Aorta (tissue), 5 donors: ENCODE measurements at regions of chr3 and their contacts with region 1.

Region 1: GRCh38 chr3:50542177-50543034 is 25.1 kb downstream of the C3orf18 start:
- DNase-seq: peak; percentile 66 to 88
- ATAC-seq: peak; percentile 79
- H3K4me3 ChIP-seq: no peak overlapping the region
- H3K27ac ChIP-seq: no peak overlapping the region
- H3K4me1 ChIP-seq: no peaks in the 10 kb centered on the region
- H3K27me3 ChIP-seq: no peaks in the 10 kb centered on the region

Region 2: DNA sequence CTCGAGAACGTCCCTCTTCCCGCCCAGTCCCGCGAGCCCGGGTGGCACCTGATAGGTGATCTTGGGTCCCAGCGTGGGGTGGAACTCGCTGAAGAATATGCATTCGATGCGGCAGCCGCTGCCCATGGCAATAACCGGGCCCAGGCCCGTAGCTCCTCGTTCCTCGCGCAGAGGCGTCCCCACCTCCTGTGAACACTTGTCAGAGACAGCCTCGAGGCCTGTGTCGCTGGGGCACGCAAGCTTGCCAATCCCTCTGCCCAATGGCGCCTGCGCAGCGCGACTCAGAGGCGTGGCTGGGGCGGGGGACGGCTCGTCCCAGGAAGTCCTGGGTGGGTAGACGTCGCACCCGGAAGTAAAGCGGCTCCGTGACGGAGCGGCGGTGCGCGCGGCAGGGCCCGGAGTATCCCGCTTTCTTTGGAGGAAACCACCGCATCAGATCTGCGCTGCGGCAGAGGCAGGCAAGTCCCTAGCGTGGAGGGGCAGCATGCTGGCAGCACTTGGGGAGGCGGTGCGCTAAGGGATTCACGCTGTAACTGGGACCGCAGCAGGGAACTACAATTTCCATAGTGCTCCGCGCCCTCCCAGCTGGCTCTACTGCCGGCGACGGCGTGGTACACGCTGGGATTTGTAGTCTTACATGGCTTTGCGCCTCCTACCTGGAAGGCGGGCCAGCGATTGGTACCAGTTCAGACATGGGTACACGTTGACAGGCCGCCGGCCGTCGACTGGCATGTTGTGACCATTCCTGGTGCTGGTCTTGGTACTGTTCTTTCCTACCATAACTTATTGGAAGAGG is 191.7 kb before region 1 on chr3 and contains the starts of genes CYB561D2 and NPRL2:
- intact Hi-C with region 1: loop called (anchors 2 to 5 kb)
- DNase-seq: peak; percentile 99
- ATAC-seq: peak; percentile 95
- H3K4me3 ChIP-seq: peak within 1 kb of the TSS; percentile 15 to 51
- H3K27ac ChIP-seq: peak within 1 kb of the TSS in 1 of 2 donors; percentile 75
- H3K4me1 ChIP-seq: no peaks in the 10 kb centered on the region
- H3K27me3 ChIP-seq: no peaks in the 10 kb centered on the region
- total RNA-seq, gene CYB561D2: 7.9 to 12.2 TPM
- total RNA-seq, gene NPRL2: 11.9 to 21.4 TPM

Region 3: GRCh38 chr3:50365080-50365841 is 177.1 kb before region 1 on chr3:
- intact Hi-C with region 1: loop called in 1 of 2 experiments (anchors 5 kb)
- DNase-seq: peak; percentile 89 to 93
- ATAC-seq: peak; percentile 88
- H3K4me3 ChIP-seq: peak overlapping the region; percentile 5 to 30
- H3K27ac ChIP-seq: no peak overlapping the region
- H3K4me1 ChIP-seq: no peaks in the 10 kb centered on the region
- H3K27me3 ChIP-seq: no peaks in the 10 kb centered on the region

Region 4: DNA sequence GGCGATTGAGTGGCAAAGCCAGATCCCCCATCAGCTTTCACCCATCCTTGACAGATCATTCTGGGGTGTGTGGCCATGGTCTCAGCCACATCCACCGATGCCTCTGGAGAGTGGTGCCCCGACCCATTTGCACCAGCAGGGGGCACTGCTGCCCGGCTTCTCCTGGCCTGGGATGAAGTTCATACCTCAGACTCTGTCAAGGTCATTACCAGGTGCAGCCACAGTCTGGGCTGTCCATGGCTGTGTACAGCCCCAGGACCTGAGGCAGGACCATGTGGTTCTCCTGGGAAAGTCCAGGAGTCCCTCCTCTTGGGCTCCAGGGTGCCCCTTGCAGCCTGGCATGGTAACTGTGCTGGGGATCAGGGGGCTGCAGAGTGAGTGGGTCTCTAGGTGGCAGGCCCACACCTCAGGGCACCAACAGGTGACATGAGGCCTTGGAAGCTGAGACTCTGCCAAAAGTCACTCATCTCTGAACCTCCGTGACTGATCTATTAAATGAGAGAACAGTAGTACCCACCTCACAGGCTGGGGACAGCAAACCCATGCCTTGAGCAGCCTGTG is 106.2 kb before region 1 on chr3:
- intact Hi-C with region 1: loop called (anchors 2 to 5 kb)
- DNase-seq: peak; percentile 63 to 90
- ATAC-seq: peak; percentile 61
- H3K4me3 ChIP-seq: no peak overlapping the region
- H3K27ac ChIP-seq: no peak overlapping the region
- H3K4me1 ChIP-seq: no peaks in the 10 kb centered on the region
- H3K27me3 ChIP-seq: no peaks in the 10 kb centered on the region

Region 5: DNA sequence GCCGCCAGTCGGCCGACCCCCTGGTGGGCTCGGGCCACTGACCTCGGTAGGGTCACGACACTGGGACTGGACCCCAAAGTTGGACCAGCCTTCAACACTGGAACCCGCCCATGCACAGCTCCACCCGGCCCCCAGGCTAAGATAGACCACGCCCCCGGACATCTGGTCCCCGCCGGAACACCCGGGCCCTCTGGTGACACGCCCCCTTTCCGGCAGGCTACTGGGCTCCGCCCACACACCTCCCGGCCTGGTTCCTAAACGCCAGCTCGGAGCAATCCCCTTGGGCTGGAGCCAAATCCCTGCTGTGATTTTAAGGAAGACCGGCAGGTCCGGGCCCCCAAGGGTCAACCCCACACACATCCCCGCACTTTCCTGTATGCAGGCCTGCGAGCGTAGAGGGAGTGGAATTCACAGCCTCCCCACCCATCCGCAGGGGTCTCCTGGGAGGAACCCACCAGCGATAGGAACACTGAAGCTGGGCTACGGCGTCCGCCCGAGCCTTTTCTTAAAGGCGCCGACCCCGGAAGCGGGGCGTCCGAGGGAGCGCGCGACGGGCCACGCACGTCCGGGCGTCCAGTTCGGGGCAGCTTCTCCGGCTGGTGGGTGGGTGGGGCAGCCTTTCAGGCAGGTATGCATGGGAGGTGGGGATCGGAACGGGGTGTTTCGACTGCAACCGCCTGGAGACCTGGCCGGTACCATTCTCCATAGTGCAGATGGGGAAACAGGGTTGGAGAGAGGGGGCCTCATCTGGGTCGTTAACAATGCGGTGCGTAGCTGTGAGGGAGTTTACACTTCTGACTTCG is 26.7 kb after region 1 on chr3 and contains the start of gene HEMK1:
- intact Hi-C with region 1: no loop called
- DNase-seq: peak; percentile 99
- ATAC-seq: peak; percentile 95
- H3K4me3 ChIP-seq: peak within 1 kb of the TSS; percentile 56 to 62
- H3K27ac ChIP-seq: peak within 1 kb of the TSS in 1 of 2 donors; percentile 72
- H3K4me1 ChIP-seq: no peaks in the 10 kb centered on the region
- H3K27me3 ChIP-seq: no peaks in the 10 kb centered on the region
- total RNA-seq, gene HEMK1: 12.0 to 21.3 TPM

Region 6: GRCh38 chr3:50600841-50601591 is 58.6 kb after region 1 on chr3:
- intact Hi-C with region 1: no loop called
- DNase-seq: peak; percentile 97
- ATAC-seq: peak; percentile 91
- H3K4me3 ChIP-seq: no peak overlapping the region
- H3K27ac ChIP-seq: peak overlapping the region; percentile 49 to 99
- H3K4me1 ChIP-seq: peaks cover 0 to 4% of the 10 kb centered on the region in 2 donors
- H3K27me3 ChIP-seq: no peaks in the 10 kb centered on the region

Region 7: GRCh38 chr3:50674349-50675178 is 132.2 kb after region 1 on chr3 and contains the start of gene DOCK3:
- intact Hi-C with region 1: no loop called
- DNase-seq: peak; percentile 64 to 85
- ATAC-seq: peak; percentile 85
- H3K4me3 ChIP-seq: peak within 1 kb of the TSS; percentile 19 to 82
- H3K27ac ChIP-seq: no peak within 1 kb of the TSS
- H3K4me1 ChIP-seq: no peaks in the 10 kb centered on the region
- H3K27me3 ChIP-seq: no peaks in the 10 kb centered on the region
- total RNA-seq, gene DOCK3: 0.72 to 0.97 TPM